GM12878 (cell line): ENCODE measurements at regions of chr7 and their contacts with region 1.

Region 1: DNA sequence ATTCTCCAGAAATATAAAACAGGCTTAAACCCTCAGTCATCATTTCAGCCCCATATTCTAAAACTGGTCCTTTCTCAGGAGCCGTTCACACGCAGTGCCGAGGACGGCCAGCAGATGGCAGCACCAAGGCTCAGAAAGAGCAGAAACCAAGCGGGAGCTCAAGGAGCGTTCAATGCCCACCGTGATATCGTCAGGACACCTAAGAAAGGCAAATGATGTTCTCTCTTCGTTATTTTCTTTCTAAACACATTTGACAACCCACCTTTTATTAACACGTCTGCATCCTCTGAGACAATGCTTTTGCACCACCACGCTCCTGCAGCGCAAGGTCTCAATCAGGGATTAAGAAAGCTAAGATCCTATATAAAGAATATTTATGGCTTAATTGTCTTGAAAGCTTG is 45.7 kb upstream of the RBM33 start:
- DNase-seq: peak; percentile 21
- ATAC-seq: peak; percentile 95
- H3K4me3 ChIP-seq: no peak overlapping the region
- H3K27ac ChIP-seq: no peak overlapping the region
- H3K4me1 ChIP-seq: no peaks in the 10 kb centered on the region
- H3K27me3 ChIP-seq: no peaks in the 10 kb centered on the region
- CTCF ChIP-seq: peak; percentile 93 to 96 (median 95); a peak in 5 of 6 replicates
- EP300 ChIP-seq: no peak
- POLR2A ChIP-seq: no peak
- RAD21 ChIP-seq: peak; percentile 90

Region 2: DNA sequence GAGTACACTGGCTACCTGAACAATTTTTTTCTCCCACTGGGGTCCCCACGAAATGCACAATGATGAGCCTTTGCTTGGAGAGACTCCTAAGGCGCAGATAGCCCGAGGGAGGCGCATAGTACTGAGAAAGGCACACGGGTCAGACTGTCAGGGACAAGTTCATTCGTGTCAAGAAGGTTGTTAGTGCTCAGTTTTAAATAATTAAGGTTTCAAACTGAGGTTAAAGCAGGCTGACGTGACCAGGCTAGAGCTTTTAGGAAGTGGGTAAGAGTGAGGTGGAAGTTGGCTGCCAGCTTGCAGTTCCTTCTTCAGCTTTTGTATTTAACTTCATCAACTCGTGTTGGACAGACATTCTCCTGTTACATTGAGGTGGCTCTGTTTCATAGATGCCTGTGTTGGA is 77.2 kb after region 1 on chr7:
- CTCF ChIA-PET with region 1: interaction called, 11 read pairs
- POLR2A ChIA-PET with region 1: interaction called, 3 read pairs
- RAD21 ChIA-PET with region 1: interaction called, 10 read pairs
- SMC1A ChIA-PET with region 1: interaction called, 6 read pairs
- in situ Hi-C with region 1: no loop called
- intact Hi-C with region 1: no loop called
- DNase-seq: no peak
- ATAC-seq: peak; percentile 77
- H3K4me3 ChIP-seq: no peak overlapping the region; the same call in 1 of the 2 replicates
- H3K27ac ChIP-seq: peak overlapping the region; percentile 67
- H3K4me1 ChIP-seq: peaks cover 19% of the 10 kb centered on the region
- H3K27me3 ChIP-seq: no peaks in the 10 kb centered on the region
- CTCF ChIP-seq: no peak
- EP300 ChIP-seq: no peak
- POLR2A ChIP-seq: no peak
- RAD21 ChIP-seq: no peak

Region 3: GRCh38 chr7:155713384-155713783 is 114.6 kb after region 1 on chr7:
- CTCF ChIA-PET with region 1: interaction called, 12 read pairs
- POLR2A ChIA-PET with region 1: no interaction called
- RAD21 ChIA-PET with region 1: interaction called, 5 read pairs
- SMC1A ChIA-PET with region 1: interaction called, 8 read pairs
- in situ Hi-C with region 1: no loop called
- intact Hi-C with region 1: no loop called
- DNase-seq: no peak
- ATAC-seq: peak; percentile 51; the same call in 2 of the 3 replicates
- H3K4me3 ChIP-seq: no peak overlapping the region
- H3K27ac ChIP-seq: no peak overlapping the region
- H3K4me1 ChIP-seq: peaks cover 6% of the 10 kb centered on the region
- H3K27me3 ChIP-seq: no peaks in the 10 kb centered on the region
- CTCF ChIP-seq: no peak
- EP300 ChIP-seq: no peak
- POLR2A ChIP-seq: no peak
- RAD21 ChIP-seq: no peak

Region 4: DNA sequence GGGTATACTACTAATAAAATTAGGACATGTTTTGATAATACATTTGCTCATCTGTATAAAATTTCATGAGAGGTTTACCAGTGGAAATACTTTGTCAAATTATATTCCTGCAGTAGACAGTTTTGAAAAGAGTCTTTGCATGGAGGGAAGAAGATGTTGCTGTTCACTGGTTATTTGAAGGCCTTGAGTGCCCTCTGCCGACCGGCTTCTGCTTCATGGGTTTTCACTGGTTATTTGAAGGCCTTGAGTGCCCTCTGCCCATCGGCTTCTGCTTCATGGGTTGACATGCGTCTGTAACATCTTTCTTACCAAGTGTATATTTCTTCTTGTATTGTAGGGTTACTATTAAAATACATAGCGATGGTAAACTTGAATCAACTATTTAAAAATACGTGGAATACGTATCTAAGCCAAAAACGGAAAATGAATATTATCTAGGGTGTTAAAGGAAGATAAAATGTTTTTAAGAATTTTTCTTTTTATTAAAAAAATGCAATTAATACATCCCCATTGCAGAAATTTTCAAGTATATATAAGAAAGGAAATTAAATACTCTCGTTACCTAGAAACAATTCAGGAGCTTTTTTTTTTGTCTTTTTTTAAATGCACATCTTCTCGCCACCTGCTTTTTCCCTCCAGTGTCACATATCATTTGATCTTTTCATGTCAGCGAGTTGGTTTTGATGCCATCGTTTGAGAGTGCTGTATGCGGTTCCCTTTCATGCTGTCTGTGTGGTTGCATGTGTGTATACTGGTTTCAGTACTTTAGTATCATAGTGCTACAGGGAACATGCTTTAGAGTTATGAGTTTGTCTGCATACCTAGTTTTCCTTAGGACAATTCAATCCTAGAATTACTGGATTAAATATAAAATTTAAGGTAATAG is 140.1 kb after region 1 on chr7:
- CTCF ChIA-PET with region 1: interaction called, 192 read pairs
- POLR2A ChIA-PET with region 1: interaction called, 3 read pairs
- RAD21 ChIA-PET with region 1: interaction called, 21 read pairs
- SMC1A ChIA-PET with region 1: interaction called, 48 read pairs
- in situ Hi-C with region 1: no loop called
- intact Hi-C with region 1: loop called (anchors 1 kb)
- DNase-seq: peak; percentile 56
- ATAC-seq: peak; percentile 92
- H3K4me3 ChIP-seq: no peak overlapping the region
- H3K27ac ChIP-seq: no peak overlapping the region
- H3K4me1 ChIP-seq: peaks cover 38% of the 10 kb centered on the region
- H3K27me3 ChIP-seq: no peaks in the 10 kb centered on the region
- CTCF ChIP-seq: peak; percentile 64 to 89 (median 66); a peak in 5 of 6 replicates
- EP300 ChIP-seq: no peak
- POLR2A ChIP-seq: no peak
- RAD21 ChIP-seq: peak; percentile 82

Region 5: DNA sequence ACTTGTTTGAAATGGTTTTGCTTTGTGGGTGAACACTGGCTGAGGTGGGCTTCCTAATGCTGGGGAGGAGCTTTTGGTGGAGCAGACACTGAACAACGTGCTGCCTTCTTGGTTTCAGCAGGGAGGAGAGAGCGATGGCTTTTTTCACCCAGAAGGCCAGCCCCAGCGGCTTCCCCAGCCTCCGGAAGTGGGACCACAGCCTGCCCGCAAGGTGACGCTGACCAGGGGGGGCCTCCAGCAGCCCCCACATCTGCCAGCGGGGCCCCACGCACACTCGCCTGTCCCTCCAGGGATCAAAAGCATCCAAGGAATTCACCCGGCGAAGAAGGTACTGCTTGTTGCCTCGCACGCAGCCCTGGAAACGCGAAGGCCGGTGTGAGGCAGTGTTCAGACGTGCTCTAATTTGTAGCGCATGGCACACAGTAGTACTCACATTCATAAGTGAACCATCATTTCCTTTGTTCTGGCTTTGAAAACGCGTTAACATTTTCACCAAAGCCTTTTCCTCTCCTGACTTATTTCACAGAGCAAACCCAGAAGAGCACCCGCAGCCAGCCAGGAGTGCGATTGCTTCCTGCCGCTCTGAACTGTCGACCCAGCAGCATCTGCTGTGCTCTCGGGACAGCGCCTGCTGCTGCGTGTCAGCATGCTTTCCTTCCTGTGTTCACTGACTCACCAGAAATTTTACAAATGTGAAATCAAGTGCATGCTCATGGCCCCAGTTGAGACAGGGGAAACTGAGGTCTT is 165.1 kb after region 1 on chr7:
- CTCF ChIA-PET with region 1: interaction called, 170 read pairs
- POLR2A ChIA-PET with region 1: no interaction called
- RAD21 ChIA-PET with region 1: interaction called, 47 read pairs
- SMC1A ChIA-PET with region 1: interaction called, 58 read pairs
- in situ Hi-C with region 1: no loop called
- intact Hi-C with region 1: loop called (anchors 1 kb)
- DNase-seq: no peak
- ATAC-seq: peak; percentile 73
- H3K4me3 ChIP-seq: no peak overlapping the region
- H3K27ac ChIP-seq: peak overlapping the region; percentile 77
- H3K4me1 ChIP-seq: peaks cover 28% of the 10 kb centered on the region
- H3K27me3 ChIP-seq: no peaks in the 10 kb centered on the region
- CTCF ChIP-seq: no peak
- EP300 ChIP-seq: no peak
- POLR2A ChIP-seq: peak; percentile 47; the same call in 1 of the 2 replicates
- RAD21 ChIP-seq: no peak